PC-3 (cell line): ENCODE measurements at regions of chr1 and their contacts with region 1.

Region 1: GRCh38 chr1:161913482-161914140 is 110.1 kb downstream of the OLFML2B start:
- DNase-seq: peak; percentile 75
- ATAC-seq: peak; percentile 86
- H3K4me3 ChIP-seq: no peak overlapping the region; the same call in 1 of the 2 replicates
- H3K27ac ChIP-seq: peak overlapping the region; percentile 25
- H3K4me1 ChIP-seq: peaks cover 33% of the 10 kb centered on the region
- H3K27me3 ChIP-seq: no peaks in the 10 kb centered on the region
- CTCF ChIP-seq: no peak

Region 2: GRCh38 chr1:161855260-161855659 is 58.4 kb before region 1 on chr1:
- CTCF ChIA-PET with region 1: no interaction called
- POLR2A ChIA-PET with region 1: no interaction called
- intact Hi-C with region 1: loop called (anchors 5 kb)
- DNase-seq: no peak
- ATAC-seq: no peak
- H3K4me3 ChIP-seq: no peak overlapping the region
- H3K27ac ChIP-seq: no peak overlapping the region
- H3K4me1 ChIP-seq: no peaks in the 10 kb centered on the region
- H3K27me3 ChIP-seq: no peaks in the 10 kb centered on the region
- CTCF ChIP-seq: no peak

Region 3: DNA sequence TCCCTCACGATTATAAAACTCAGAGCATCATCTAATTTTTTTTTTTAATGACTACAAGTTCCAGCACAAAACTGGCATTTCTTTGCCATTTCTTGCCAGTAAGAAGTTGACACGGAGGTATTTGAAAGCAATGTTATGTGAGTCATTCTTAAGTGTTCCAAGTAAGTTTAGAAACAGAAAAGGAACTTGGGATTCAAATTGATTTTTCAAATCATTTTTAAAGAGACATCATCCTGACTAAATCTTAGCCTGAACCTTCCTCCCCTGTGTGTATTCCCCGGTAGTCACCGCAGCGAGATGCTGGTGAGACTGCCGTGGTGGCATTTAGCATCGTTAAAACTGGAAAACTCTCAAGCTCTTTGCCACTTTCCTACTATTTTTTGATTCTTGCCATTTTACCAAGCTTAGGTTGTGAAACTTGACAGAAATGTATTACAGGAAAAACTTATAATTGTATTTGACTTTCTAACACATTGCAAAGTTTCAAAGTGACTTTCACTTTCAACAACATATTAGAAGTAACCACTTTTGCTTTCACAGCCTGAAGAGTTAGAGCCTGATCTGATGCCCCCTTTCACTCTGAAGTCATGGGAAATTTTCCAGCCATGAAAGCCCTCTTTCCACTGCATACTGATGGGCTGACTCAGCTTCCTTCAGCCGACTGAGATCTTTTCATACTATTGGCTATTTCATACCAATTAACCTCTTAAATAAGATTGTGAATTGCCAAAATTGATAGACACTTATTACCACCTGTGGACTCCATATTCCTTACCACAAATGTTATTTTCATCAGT is 48.7 kb after region 1 on chr1:
- CTCF ChIA-PET with region 1: no interaction called
- POLR2A ChIA-PET with region 1: no interaction called
- intact Hi-C with region 1: loop called (anchors 5 kb)
- DNase-seq: peak; percentile 81
- ATAC-seq: peak; percentile 86
- H3K4me3 ChIP-seq: peak overlapping the region; percentile 65
- H3K27ac ChIP-seq: peak overlapping the region; percentile 81
- H3K4me1 ChIP-seq: peaks cover 27% of the 10 kb centered on the region
- H3K27me3 ChIP-seq: no peaks in the 10 kb centered on the region
- CTCF ChIP-seq: 0 out of 2 replicates have a peak, but pooled peaks have one; percentile 16